Activated B cell treated with CpG ODN at 0.5 μM for 24 hours (primary cell): ENCODE measurements at regions of chr1 and their contacts with region 1.

Region 1: GRCh38 chr1:68346188-68346808 is 103.5 kb downstream of the RPE65 start:
- DNase-seq: no peak
- ATAC-seq: no peak
- H3K4me3 Mint-ChIP-seq: no peak overlapping the region
- H3K27ac Mint-ChIP-seq: peak overlapping the region; percentile 11
- H3K4me1 Mint-ChIP-seq: peaks cover 22% of the 10 kb centered on the region
- H3K27me3 Mint-ChIP-seq: no peaks in the 10 kb centered on the region
- CTCF ChIP-seq: no peak

Region 2: GRCh38 chr1:68321084-68321685 is 25.1 kb before region 1 on chr1:
- CTCF ChIA-PET with region 1: no interaction called
- POLR2A ChIA-PET with region 1: no interaction called
- intact Hi-C with region 1: no loop called
- DNase-seq: no peak
- ATAC-seq: no peak
- H3K4me3 Mint-ChIP-seq: no peak overlapping the region
- H3K27ac Mint-ChIP-seq: no peak overlapping the region
- H3K4me1 Mint-ChIP-seq: no peaks in the 10 kb centered on the region
- H3K27me3 Mint-ChIP-seq: peaks cover 3% of the 10 kb centered on the region
- CTCF ChIP-seq: no peak

Region 3: GRCh38 chr1:68442822-68443556 is 96.7 kb after region 1 on chr1:
- CTCF ChIA-PET with region 1: no interaction called
- POLR2A ChIA-PET with region 1: no interaction called
- intact Hi-C with region 1: loop called (anchors 10 kb)
- DNase-seq: no peak
- ATAC-seq: no peak
- H3K4me3 Mint-ChIP-seq: no peak overlapping the region
- H3K27ac Mint-ChIP-seq: no peak overlapping the region
- H3K4me1 Mint-ChIP-seq: peaks cover 4% of the 10 kb centered on the region
- H3K27me3 Mint-ChIP-seq: peaks cover 9% of the 10 kb centered on the region
- CTCF ChIP-seq: peak; percentile 40